Activated CD4-positive, alpha-beta memory T cell treated with anti-CD3 and anti-CD28 coated beads for 36 hours (primary cell): ENCODE measurements at regions of chr10 and their contacts with region 1.

Region 1: GRCh38 chr10:61140765-61141392 is 196.9 kb upstream of the RHOBTB1 start:
- DNase-seq: no peak
- H3K4me3 Mint-ChIP-seq: no peak overlapping the region
- H3K27ac Mint-ChIP-seq: no peak overlapping the region
- H3K4me1 Mint-ChIP-seq: no peaks in the 10 kb centered on the region
- H3K27me3 Mint-ChIP-seq: peaks cover 1% of the 10 kb centered on the region

Region 2: DNA sequence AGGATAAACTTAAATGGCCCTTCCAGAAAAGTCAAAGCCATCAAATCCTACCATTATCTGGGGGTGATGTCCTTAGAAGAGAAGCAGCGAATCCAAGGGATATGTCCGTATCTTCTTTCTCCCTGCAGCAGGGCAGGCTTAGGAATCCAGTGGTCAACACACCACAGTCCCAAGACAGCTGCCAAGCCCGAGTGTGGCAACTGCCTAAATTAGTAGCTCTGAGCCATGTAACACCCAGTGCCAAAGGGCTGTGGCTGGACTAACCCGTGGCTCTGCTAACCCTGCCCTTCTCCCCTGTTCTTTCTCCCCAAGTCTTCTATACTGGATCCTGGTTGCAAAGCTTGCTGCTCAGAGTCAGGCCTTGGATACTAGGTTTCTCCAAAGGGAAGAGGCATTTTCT is 287.8 kb before region 1 on chr10:
- CTCF ChIA-PET with region 1: no interaction called
- POLR2A ChIA-PET with region 1: no interaction called
- intact Hi-C with region 1: no loop called
- DNase-seq: no peak
- H3K4me3 Mint-ChIP-seq: no peak overlapping the region
- H3K27ac Mint-ChIP-seq: no peak overlapping the region
- H3K4me1 Mint-ChIP-seq: no peaks in the 10 kb centered on the region
- H3K27me3 Mint-ChIP-seq: peaks cover 1% of the 10 kb centered on the region

Region 3: DNA sequence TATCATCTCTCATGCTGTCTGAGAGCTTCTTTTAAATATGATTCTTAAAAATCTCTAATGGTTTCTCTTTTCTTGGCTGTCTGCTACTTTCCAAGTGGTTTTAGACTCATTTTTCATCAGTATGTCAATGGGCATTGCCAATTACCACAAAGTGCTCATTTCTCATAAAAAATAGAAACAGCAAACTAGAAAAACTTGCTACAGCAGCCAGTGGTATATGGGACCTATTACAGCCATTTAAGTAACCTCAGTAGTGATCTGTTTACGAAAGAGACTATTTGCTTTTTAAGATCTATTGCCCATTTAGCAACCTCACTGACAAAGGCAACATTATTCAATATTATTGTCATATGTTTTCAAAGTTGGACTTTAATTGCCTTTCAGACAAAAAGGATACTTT is 10.2 kb after region 1 on chr10:
- CTCF ChIA-PET with region 1: interaction called, 15 read pairs
- POLR2A ChIA-PET with region 1: no interaction called
- intact Hi-C with region 1: no loop called
- DNase-seq: no peak
- H3K4me3 Mint-ChIP-seq: no peak overlapping the region
- H3K27ac Mint-ChIP-seq: no peak overlapping the region
- H3K4me1 Mint-ChIP-seq: no peaks in the 10 kb centered on the region
- H3K27me3 Mint-ChIP-seq: peaks cover 9% of the 10 kb centered on the region

Region 4: DNA sequence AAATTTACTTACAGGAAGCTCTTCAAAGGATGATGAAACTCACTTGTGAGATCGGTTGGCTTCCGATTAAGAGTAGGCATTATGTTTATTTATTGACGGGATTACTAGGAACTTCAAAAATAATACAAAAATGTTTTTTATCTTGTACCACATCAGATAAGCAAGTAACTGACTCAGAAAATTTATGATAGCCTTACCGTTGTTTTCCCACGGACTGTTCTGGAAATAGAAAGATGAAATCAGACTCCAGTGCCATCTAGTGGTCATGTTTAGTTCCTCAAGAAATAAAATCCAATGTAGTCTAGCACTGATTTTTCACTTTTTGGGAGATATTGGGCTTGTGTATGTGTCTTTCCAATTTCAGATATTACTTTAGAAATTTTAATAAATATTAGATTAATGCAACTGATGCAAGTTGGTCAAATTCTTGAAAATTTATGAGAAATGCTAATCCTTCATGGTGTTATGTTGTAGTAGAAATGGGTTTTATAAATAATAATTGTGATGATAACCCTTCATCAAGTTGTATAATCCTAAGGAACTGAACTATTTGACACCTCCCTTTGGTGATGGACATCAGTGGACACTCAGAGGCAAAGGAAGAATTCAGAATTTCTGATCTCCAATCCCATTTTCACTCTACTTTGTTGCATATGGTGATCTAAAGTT is 143.5 kb after region 1 on chr10:
- CTCF ChIA-PET with region 1: interaction called, 10 read pairs
- POLR2A ChIA-PET with region 1: no interaction called
- intact Hi-C with region 1: loop called (anchors 2 kb)
- DNase-seq: no peak
- H3K4me3 Mint-ChIP-seq: peak overlapping the region; percentile 27
- H3K27ac Mint-ChIP-seq: no peak overlapping the region
- H3K4me1 Mint-ChIP-seq: peaks cover 18% of the 10 kb centered on the region
- H3K27me3 Mint-ChIP-seq: peaks cover 2% of the 10 kb centered on the region